Activated T-helper 1 cell treated with anti-CD3 and anti-CD28 coated beads, Interleukin-12 subunit alpha, Interleukin-12 subunit beta, Interleukin-2, Interleukin-4 antibody, amounts not matched to agents 30 ng/mL and 10 ng/mL and 1 ng/mL, durations not matched to agents 14 hours and 24 hours and 36 hours (primary cell): ENCODE measurements at regions of chr6 and their contacts with region 1.

Region 1: DNA sequence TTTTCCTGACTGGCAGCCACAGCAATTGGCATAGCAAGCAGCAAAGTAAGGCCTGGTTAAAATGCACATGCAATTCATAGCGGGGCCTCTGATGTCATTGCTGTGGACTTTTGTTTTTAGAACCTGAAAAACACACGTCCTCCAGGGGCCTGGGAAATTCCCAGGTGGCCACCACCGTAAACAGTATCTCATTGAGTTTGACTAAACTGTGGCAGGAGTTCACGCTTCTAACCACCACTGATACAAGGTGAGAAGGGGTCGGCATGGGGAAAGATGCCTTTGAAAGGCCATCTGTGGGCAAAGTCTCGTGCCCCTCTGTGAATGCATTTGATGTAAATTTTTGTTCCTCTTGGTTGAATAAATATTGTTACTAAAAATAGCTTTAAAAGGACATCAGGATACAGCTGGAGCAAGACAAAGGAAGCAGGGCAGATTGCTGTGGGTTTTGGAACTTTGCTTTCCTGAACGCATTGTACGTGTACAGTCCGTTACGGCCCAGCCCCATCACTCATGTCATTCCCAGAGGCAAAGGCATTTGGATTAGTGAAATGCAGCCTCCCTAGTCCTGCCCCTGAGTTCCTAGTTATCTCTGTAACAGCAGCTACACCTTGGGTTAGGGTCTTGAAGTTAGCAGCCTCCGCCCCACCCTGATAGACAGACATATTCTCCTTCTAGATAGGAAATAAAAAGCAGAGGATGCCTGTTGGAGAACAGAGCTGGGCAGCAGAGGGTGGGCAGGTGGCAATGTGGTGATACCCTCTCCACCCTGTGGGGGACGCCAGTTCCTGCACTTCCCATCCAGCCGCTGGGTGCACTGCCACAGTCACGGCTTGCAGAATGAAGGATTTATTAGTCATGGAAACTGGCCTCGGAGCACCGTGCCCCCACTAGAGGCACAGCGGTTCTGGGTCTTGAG is 80.3 kb downstream of the ZDHHC14 start:
- DNase-seq: peak; percentile 75
- H3K4me3 Mint-ChIP-seq: peak overlapping the region; percentile 63
- H3K27ac Mint-ChIP-seq: peak overlapping the region; percentile 95
- H3K4me1 Mint-ChIP-seq: peaks cover 66% of the 10 kb centered on the region
- H3K27me3 Mint-ChIP-seq: no peaks in the 10 kb centered on the region

Region 2: DNA sequence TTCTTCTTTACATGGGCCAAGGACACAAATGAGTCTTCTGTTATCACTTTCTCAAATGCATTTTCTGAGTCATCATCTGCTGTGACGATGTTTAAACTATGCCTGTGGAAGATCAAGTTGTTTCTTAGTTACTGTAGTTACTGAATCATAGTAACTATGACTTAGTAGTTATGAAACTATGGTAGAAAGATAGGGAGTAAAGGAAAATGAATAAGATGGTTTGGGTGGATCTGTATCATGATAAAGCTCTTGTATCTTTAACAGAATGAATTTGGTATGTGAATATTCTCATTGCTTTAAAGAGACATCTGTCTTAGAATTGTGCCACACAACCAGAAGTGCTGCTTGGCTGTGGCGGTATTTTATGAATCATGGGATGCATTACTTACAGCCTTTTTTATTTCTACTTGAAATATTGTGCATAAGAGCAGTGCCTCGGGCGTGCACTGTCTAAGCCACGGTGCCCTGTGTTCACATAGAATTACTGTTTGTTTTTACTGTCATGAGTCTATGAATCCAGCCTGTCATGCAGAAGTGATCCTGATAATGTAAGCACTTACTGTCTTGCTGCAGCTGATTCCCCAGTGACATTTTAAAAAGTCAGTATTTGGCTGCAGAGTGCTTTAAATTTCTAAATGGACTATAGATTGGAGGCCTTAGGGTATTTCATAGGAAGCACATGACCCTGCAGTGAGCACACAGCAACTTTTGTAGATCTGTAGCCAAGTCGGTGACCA is 353.2 kb before region 1 on chr6:
- intact Hi-C with region 1: loop called (anchors 10 kb)
- DNase-seq: no peak
- H3K4me3 Mint-ChIP-seq: no peak overlapping the region
- H3K27ac Mint-ChIP-seq: peak overlapping the region; percentile 73
- H3K4me1 Mint-ChIP-seq: peaks cover 55% of the 10 kb centered on the region
- H3K27me3 Mint-ChIP-seq: no peaks in the 10 kb centered on the region

Region 3: GRCh38 chr6:157329829-157330228 is 131.4 kb before region 1 on chr6:
- intact Hi-C with region 1: no loop called
- DNase-seq: no peak
- H3K4me3 Mint-ChIP-seq: no peak overlapping the region
- H3K27ac Mint-ChIP-seq: no peak overlapping the region
- H3K4me1 Mint-ChIP-seq: peaks cover 20% of the 10 kb centered on the region
- H3K27me3 Mint-ChIP-seq: peaks cover 47% of the 10 kb centered on the region

Region 4: DNA sequence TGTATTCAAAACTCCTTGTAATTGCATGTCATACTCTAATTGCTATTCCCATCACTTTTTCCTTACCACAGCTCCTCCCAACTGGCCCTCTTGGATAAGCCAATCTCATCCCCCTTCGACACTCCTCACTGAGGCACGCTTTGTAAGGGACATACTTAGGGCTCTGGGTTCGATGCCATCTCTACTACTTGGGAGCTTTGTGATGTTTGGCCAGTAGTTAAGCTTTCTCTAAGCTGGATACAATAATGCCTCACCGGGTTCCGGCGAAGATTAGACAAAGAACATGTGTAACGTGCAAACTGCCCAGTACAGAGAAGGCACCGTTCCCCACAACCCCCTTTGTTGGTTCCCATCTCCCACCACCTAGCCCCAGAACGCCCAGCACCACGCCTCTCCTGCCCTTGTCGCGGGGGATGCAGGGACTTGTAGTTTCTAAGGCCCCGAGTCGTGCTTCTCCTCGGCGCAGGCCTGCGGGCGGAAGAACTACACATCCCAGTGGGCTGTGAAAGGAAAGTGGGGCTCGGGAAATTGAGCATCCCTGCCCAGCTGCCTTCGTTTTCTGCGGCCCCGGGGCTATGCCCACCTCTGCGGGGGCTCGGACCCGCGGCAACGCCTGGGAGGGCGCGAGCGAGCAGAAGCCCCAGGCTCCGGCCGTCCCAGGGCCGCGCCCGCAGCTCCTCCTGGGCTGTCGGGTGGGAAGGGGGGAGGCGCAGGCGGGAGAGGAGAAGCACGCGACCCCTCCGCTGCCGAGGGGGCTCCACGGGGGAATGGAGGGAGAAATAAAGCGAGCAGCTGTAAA is 81.4 kb before region 1 on chr6:
- intact Hi-C with region 1: loop called (anchors 1 kb)
- DNase-seq: peak; percentile 86
- H3K4me3 Mint-ChIP-seq: peak overlapping the region; percentile 88
- H3K27ac Mint-ChIP-seq: peak overlapping the region; percentile 83
- H3K4me1 Mint-ChIP-seq: peaks cover 39% of the 10 kb centered on the region
- H3K27me3 Mint-ChIP-seq: peaks cover 6% of the 10 kb centered on the region

Region 5: DNA sequence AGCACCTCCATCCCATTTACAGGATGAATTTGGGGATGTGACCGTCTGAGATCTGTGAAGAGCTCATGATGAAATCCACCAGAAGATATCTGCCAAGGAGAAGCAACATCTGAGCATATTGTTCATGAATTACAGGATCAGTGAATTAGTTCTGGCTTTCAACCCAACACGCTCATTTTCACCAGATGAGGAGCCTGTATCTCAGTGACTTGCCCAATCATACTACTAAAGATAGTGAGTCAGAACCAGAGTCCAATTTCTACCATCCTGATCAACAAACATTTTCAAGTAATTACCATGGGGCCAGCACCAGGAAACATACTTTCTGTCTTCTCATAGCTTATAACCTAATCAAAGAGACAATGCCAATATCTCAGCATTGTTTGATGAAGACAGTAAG is 36.3 kb after region 1 on chr6:
- intact Hi-C with region 1: loop called (anchors 2 kb)
- DNase-seq: no peak
- H3K4me3 Mint-ChIP-seq: no peak overlapping the region
- H3K27ac Mint-ChIP-seq: no peak overlapping the region
- H3K4me1 Mint-ChIP-seq: peaks cover 48% of the 10 kb centered on the region
- H3K27me3 Mint-ChIP-seq: peaks cover 7% of the 10 kb centered on the region

Region 6: GRCh38 chr6:157656437-157656997 is 195.3 kb after region 1 on chr6:
- intact Hi-C with region 1: no loop called
- DNase-seq: no peak
- H3K4me3 Mint-ChIP-seq: no peak overlapping the region
- H3K27ac Mint-ChIP-seq: no peak overlapping the region
- H3K4me1 Mint-ChIP-seq: no peaks in the 10 kb centered on the region
- H3K27me3 Mint-ChIP-seq: peaks cover 3% of the 10 kb centered on the region

Region 7: DNA sequence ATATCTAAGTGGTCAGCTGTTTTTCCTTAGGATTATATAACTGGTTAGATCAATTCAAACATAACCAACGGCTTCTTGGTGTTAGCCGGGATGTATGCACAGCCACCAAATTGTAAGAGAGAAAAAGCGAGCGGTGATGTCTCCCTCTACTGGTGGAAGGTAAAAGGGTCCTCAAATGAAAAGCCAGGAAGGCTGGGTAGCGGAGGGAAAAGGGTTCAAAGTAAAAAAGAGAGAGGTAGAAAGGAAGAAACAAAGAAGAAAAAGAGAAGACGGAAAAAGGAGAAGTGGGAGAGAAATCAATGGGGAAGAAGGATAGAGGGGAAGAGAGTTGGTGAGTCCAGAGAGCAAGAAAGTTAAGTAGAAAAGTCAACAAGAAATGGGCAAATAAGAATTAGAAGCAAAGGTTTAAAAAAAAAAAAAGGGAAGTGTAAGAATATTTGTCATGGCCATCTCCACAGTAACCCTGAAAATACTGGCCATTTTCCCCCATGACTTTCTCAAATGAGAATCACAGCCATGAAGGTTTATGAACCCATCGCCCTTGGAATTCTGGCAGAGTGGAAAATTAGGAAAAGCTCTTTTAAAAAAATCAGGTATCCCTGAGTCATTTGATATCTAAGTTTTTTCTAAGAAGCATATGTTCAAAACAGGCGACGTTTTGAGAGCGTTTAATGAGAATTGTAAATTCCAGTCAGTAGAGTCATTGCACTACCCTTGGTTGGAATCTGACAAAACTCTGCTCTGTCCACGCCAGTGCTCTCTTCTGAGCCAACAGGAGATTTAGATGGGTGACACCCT is 206.2 kb after region 1 on chr6:
- intact Hi-C with region 1: loop called (anchors 5 kb)
- DNase-seq: peak; percentile 30
- H3K4me3 Mint-ChIP-seq: no peak overlapping the region
- H3K27ac Mint-ChIP-seq: peak overlapping the region; percentile 41
- H3K4me1 Mint-ChIP-seq: peaks cover 12% of the 10 kb centered on the region
- H3K27me3 Mint-ChIP-seq: peaks cover 10% of the 10 kb centered on the region